Brain microvascular endothelial cell (primary cell): ENCODE measurements at regions of chr6 and their contacts with region 1.

Region 1: DNA sequence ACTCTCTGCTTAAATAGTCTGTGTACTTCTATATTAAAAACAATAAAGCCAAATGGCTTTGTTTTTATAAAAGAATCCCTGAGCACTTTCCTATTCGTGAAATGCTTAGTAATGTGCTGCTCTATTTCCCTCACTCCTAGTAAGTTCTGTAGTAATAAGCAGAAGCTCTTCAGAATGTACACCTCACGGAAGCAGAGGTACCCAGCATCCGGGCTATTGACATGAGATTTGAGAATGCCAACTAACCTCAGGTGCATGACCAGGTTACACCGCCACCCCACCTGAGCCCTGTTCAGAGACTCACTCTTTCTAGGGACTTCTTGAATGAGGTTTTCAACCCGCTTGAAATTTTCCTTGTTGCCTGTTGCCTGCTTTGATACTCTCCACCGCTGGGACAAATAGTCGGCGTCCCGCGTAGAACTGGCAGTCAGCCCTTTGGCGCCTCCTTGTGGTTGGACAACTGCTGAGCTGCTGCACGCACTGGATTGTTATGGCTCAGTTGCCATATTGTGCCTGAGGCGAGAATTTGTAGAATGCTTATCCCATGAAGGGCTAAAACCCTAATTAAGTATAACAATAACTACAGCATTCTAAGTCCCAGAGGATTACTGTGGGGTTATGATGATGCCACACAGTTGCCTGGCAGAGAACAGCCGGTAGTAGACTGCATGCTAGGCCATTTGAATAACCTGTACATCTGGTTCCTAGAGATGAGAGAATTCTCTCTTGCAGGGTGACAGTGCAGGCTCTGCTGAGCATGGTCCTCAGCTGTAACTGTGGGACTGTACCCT is 95.4 kb downstream of the KHDC1L start:
- DNase-seq: peak; percentile 77
- H3K4me3 ChIP-seq: no peak overlapping the region
- H3K27ac ChIP-seq: no peak overlapping the region
- H3K27me3 ChIP-seq: no peaks in the 10 kb centered on the region
- CTCF ChIP-seq: peak; percentile 99

Region 2: GRCh38 chr6:72619883-72620696 is 509.8 kb before region 1 on chr6:
- in situ Hi-C with region 1: loop called (anchors 10 kb)
- DNase-seq: peak; percentile 11
- H3K4me3 ChIP-seq: peak overlapping the region; percentile 67
- H3K27ac ChIP-seq: no peak overlapping the region
- H3K27me3 ChIP-seq: no peaks in the 10 kb centered on the region
- CTCF ChIP-seq: no peak

Region 3: DNA sequence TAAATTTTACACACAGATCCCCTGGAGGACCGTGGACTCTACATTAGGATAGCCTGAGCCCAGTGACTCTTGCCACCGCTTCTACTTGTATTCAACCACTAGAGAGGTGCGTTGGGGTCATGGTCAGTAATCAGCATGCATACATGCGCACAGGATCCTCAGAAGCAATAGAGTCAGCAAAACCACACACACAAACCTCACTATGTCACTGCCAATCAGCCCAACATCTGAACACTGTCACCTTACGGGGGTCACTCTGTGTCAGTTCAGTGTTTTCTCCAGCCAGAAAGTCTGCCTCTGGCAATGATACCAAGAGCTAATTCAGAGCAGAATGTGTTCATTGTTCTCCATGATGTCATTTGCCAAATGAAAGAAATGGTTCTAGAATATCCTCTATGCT is 129.9 kb before region 1 on chr6:
- in situ Hi-C with region 1: no loop called
- DNase-seq: no peak
- H3K4me3 ChIP-seq: no peak overlapping the region
- H3K27ac ChIP-seq: no peak overlapping the region
- H3K27me3 ChIP-seq: no peaks in the 10 kb centered on the region
- CTCF ChIP-seq: no peak

Region 4: GRCh38 chr6:73248192-73248903 is 118.5 kb after region 1 on chr6:
- in situ Hi-C with region 1: no loop called
- DNase-seq: no peak
- H3K4me3 ChIP-seq: no peak overlapping the region
- H3K27ac ChIP-seq: no peak overlapping the region
- H3K27me3 ChIP-seq: no peaks in the 10 kb centered on the region
- CTCF ChIP-seq: no peak